Gastrocnemius medialis (tissue), 4 donors: ENCODE measurements at regions of chr6 and their contacts with region 1.

Region 1: DNA sequence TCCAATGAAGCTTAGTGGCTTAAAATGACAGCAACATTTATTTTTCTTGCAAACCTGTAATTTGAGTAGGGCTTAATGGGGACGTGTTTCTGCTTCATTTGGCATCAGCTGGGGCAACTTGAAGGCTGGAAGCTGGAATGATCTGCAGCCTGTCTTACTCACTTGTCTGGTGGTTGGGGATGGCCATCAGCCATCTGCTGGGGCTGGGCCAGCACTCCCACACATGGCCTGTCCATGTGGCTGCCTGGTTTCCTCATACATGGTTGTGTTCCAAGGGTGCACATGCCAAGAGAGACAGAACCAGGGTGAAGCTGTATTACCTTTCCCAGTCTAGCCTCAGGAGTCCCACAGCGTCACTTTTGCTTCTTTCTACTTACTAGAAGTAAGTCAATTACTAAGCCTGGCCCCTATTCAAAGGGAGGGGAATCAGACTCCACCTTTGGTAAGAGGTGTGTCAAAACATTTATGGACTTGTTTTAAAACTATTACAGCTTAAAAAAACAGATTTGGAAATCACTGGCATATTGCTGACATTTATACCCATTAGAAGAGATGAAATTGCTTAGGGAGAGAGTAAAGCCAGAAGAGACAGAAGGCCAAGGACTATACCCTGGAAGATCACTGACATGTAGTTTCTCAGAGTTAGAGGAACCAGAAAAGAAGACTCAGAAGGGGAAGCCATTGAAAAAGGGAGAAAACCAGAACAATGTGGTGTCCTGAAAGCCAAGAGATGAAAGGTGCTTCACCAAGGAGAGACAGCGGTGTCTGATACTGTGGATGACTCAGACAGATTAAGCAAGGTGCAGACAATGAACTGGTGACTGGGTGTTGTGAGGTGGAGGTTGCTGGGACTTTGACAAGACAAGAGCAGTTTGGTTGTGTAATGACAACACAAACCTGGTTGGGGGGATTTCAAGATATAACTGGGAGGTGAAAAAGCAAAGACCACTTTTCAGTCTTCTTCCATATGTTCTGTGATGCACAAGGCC is 345.2 kb downstream of the GJA1 start:
- DNase-seq: peak; percentile 89 to 98
- ATAC-seq: peak; percentile 92 to 93
- H3K4me3 ChIP-seq: peak overlapping the region in 1 of 4 donors; percentile 32
- H3K27ac ChIP-seq: peak overlapping the region; percentile 75 to 90 (median 88)
- H3K4me1 ChIP-seq: peaks cover 10 to 26% of the 10 kb centered on the region in 2 donors
- H3K27me3 ChIP-seq: no peaks in the 10 kb centered on the region
- CTCF ChIP-seq: no peak
- POLR2A ChIP-seq: no peak

Region 2: GRCh38 chr6:121849477-121849876 is 68.9 kb after region 1 on chr6:
- in situ Hi-C with region 1: no loop called
- intact Hi-C with region 1: loop called (anchors 5 kb)
- DNase-seq: peak in 1 of 2 donors; percentile 43
- ATAC-seq: peak; percentile 74 to 81
- H3K4me3 ChIP-seq: no peak overlapping the region
- H3K27ac ChIP-seq: peak overlapping the region in 2 of 4 donors; percentile 1 to 9
- H3K4me1 ChIP-seq: no peaks in the 10 kb centered on the region
- H3K27me3 ChIP-seq: no peaks in the 10 kb centered on the region
- CTCF ChIP-seq: peak; percentile 55 to 70 (median 58)
- POLR2A ChIP-seq: no peak

Region 3: GRCh38 chr6:122129313-122130025 is 348.9 kb after region 1 on chr6:
- in situ Hi-C with region 1: no loop called
- intact Hi-C with region 1: loop called (anchors 5 kb)
- DNase-seq: no peak
- ATAC-seq: peak in 1 of 2 donors; percentile 9
- H3K4me3 ChIP-seq: no peak overlapping the region
- H3K27ac ChIP-seq: peak overlapping the region; percentile 68 to 92 (median 82)
- H3K4me1 ChIP-seq: peaks cover 37 to 43% of the 10 kb centered on the region in 2 donors
- H3K27me3 ChIP-seq: no peaks in the 10 kb centered on the region
- CTCF ChIP-seq: no peak
- POLR2A ChIP-seq: no peak